Pancreas (tissue), 10 donors: ENCODE measurements at regions of chr11 and their contacts with region 1.

Region 1: DNA sequence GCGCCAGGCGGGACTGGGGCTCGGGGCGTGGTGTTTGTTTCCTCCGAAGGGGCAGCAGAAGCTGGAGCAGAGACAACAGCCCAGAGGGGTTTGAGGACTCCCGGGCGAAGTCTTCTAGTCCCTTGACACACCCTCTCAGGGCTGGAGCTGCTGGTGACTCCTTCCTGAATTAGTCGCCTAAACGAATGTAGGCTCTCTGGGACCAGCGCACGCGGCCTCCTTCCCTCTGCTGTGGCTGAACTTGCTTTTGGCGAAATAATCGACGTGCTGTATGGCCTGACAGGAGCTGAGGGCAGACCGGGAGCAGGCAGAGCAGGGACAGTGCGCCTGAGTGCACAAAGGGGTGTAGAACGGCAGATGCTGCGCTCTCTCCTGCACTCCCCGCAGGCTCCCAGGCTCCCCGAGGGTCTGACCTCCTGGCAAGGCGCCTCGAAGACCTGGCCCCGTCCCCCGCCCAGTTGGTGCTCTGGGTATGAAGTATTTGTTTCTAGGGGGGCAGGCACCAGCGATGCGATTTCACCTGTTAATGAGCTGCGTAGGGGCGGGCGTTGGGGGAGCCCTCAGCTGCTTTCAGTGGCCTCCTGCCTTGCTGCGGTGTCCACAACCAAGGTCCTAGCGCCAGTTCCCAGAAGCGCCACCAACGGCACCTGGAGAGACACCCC is 5.3 kb downstream of the SLC17A6 start:
- DNase-seq: peak in 3 of 6 donors; percentile 14 to 55 (median 49)
- ATAC-seq: peak in 3 of 4 donors; percentile 35 to 43 (median 35)
- H3K4me3 ChIP-seq: peak overlapping the region in 1 of 4 donors; percentile 3
- H3K27ac ChIP-seq: no peak overlapping the region
- H3K4me1 ChIP-seq: no peaks in the 10 kb centered on the region
- H3K27me3 ChIP-seq: peaks cover 5 to 41% (median 13%) of the 10 kb centered on the region in 4 donors
- CTCF ChIP-seq: no peak

Region 2: DNA sequence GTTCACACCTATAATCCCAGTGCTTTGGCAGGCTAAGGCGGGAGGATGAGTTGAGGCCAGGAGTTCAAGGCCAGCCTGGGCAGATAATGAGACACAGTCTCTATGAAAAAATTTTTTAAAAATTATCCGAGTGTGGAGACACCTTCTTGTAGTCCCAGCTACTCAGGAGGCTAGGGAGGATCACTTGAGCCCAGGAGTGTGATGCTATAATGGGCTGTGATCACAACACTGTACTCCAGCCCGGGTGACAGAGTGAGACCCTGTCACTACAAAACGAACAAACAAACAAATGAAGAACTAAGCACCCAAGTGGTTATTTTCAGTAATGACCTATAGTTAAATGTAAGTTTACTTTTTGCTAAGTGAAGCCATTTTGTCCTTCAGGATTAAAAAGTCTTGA is 118.3 kb before region 1 on chr11:
- intact Hi-C with region 1: no loop called
- DNase-seq: no peak
- ATAC-seq: no peak
- H3K4me3 ChIP-seq: no peak overlapping the region
- H3K27ac ChIP-seq: no peak overlapping the region
- H3K4me1 ChIP-seq: no peaks in the 10 kb centered on the region
- H3K27me3 ChIP-seq: no peaks in the 10 kb centered on the region
- CTCF ChIP-seq: no peak

Region 3: GRCh38 chr11:22304337-22304961 is 39.1 kb before region 1 on chr11:
- intact Hi-C with region 1: no loop called
- DNase-seq: no peak
- ATAC-seq: peak in 3 of 4 donors; percentile 69 to 78 (median 77)
- H3K4me3 ChIP-seq: no peak overlapping the region
- H3K27ac ChIP-seq: no peak overlapping the region
- H3K4me1 ChIP-seq: no peaks in the 10 kb centered on the region
- H3K27me3 ChIP-seq: no peaks in the 10 kb centered on the region
- CTCF ChIP-seq: peak; percentile 35 to 59 (median 54)

Region 4: GRCh38 chr11:22392561-22392960 is 49.1 kb after region 1 on chr11:
- intact Hi-C with region 1: no loop called
- DNase-seq: no peak
- ATAC-seq: no peak
- H3K4me3 ChIP-seq: no peak overlapping the region
- H3K27ac ChIP-seq: no peak overlapping the region
- H3K4me1 ChIP-seq: no peaks in the 10 kb centered on the region
- H3K27me3 ChIP-seq: no peaks in the 10 kb centered on the region
- CTCF ChIP-seq: no peak

Region 5: DNA sequence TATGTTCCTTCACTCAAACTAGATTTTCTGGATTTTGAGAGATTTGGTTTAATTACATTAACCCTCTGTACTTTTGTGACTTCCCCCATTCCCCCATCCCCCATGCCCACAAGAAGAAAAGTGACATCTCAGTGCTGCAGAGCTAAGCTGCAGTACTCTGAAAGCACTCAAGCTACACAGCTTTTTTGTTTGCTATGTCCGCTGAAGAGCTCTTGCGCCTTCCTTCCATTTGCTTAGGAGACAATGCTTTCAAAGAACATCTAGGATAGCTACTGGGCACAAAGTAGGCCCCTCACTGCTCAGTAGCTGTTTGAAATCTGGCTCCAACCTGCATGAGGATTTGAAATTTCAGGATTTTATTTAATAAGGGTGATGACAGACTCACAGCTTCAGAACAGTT is 64.4 kb after region 1 on chr11:
- intact Hi-C with region 1: no loop called
- DNase-seq: no peak
- ATAC-seq: no peak
- H3K4me3 ChIP-seq: no peak overlapping the region
- H3K27ac ChIP-seq: no peak overlapping the region
- H3K4me1 ChIP-seq: no peaks in the 10 kb centered on the region
- H3K27me3 ChIP-seq: no peaks in the 10 kb centered on the region
- CTCF ChIP-seq: no peak

Region 6: GRCh38 chr11:22539821-22540256 is 196.3 kb after region 1 on chr11:
- intact Hi-C with region 1: loop called in 1 of 3 experiments (anchors 10 kb)
- DNase-seq: no peak
- ATAC-seq: peak in 3 of 4 donors; percentile 82 to 87 (median 86)
- H3K4me3 ChIP-seq: no peak overlapping the region
- H3K27ac ChIP-seq: no peak overlapping the region
- H3K4me1 ChIP-seq: no peaks in the 10 kb centered on the region
- H3K27me3 ChIP-seq: no peaks in the 10 kb centered on the region
- CTCF ChIP-seq: peak; percentile 13 to 47 (median 35)

Region 7: GRCh38 chr11:22787551-22788162 is 444.2 kb after region 1 on chr11:
- intact Hi-C with region 1: loop called in 1 of 3 experiments (anchors 10 kb)
- DNase-seq: peak in 2 of 6 donors; percentile 8 to 23
- ATAC-seq: peak; percentile 71 to 93 (median 90)
- H3K4me3 ChIP-seq: no peak overlapping the region
- H3K27ac ChIP-seq: no peak overlapping the region
- H3K4me1 ChIP-seq: no peaks in the 10 kb centered on the region
- H3K27me3 ChIP-seq: no peaks in the 10 kb centered on the region
- CTCF ChIP-seq: peak; percentile 33 to 64 (median 47)